Breast epithelium (tissue), 4 donors: ENCODE measurements at regions of chr12 and their contacts with region 1.

Region 1: DNA sequence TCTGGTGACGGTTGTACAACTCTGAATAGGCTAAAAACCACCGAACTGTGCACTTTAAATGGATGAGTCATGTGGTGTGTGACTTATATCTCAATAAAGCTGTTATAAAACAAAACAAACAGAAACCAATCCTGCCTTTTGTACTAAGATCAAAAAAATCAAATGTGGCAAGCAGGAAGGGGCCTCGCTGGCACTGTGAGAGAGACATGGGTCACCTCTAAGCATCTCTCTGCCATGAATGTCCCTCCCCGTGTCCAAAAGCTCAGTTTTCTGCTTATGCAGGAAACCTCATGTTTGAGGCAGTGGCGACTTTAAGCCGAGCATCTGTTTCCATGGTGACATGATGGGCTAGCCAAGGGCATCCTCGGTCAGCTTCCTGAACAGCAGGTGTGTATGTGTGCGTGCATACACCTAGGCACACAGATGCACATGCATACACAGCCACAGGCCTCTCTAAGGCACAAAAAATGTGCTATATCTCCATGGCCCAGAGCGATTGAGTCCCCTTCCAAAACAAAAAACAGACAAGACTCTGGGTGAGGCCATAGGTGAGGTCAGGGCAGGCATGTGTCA is 44.4 kb downstream of the ARL6IP4 start:
- DNase-seq: no peak
- H3K4me3 ChIP-seq: no peak overlapping the region
- H3K27ac ChIP-seq: no peak overlapping the region
- H3K4me1 ChIP-seq: no peaks in the 10 kb centered on the region
- H3K27me3 ChIP-seq: no peaks in the 10 kb centered on the region
- CTCF ChIP-seq: no peak
- POLR2A ChIP-seq: no peak

Region 2: DNA sequence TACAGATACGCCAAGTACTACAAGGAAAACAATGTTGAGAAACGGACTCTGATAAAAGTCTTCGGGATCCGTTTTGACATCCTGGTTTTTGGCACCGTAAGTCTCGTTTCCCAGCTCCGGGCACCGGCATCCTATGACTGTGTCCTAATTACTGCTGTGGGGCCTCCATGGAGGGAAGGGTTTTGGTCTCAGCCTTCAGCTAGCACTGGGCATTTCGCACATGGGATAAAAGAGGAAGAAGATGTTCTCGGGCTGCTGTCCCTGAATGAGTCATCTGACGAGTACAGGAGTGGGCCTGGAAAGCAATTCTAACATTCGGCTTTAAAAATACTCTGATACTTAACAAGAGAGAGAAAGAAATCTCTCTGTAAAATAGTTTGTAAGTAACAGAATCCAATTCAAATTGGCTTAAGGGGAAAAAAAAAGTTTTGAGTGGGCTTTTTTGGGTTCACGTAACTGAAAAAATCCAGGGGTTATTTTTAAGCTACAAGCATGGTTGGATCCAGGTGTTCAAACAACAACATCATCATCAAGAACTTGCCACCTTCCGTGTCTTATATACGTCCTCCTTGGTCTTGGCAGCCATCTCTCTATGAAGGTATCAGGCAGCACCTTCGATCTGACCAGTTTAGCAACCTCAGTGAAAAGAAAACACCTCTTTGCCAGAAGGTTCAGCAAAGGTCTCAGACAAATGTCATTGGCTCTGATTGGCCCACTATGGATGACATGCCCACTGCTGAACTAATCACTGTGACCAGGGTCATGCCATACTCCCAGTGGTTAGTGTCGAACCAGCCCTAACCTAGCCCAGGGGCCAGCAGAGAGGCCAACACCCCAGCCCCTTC is 1849.3 kb before region 1 on chr12:
- intact Hi-C with region 1: loop called (anchors 5 kb)
- DNase-seq: no peak
- H3K4me3 ChIP-seq: no peak overlapping the region
- H3K27ac ChIP-seq: no peak overlapping the region
- H3K4me1 ChIP-seq: no peaks in the 10 kb centered on the region
- H3K27me3 ChIP-seq: no peaks in the 10 kb centered on the region
- CTCF ChIP-seq: no peak
- POLR2A ChIP-seq: no peak